OCI-LY7 (cell line): ENCODE measurements at regions of chr12 and their contacts with region 1.

Region 1: DNA sequence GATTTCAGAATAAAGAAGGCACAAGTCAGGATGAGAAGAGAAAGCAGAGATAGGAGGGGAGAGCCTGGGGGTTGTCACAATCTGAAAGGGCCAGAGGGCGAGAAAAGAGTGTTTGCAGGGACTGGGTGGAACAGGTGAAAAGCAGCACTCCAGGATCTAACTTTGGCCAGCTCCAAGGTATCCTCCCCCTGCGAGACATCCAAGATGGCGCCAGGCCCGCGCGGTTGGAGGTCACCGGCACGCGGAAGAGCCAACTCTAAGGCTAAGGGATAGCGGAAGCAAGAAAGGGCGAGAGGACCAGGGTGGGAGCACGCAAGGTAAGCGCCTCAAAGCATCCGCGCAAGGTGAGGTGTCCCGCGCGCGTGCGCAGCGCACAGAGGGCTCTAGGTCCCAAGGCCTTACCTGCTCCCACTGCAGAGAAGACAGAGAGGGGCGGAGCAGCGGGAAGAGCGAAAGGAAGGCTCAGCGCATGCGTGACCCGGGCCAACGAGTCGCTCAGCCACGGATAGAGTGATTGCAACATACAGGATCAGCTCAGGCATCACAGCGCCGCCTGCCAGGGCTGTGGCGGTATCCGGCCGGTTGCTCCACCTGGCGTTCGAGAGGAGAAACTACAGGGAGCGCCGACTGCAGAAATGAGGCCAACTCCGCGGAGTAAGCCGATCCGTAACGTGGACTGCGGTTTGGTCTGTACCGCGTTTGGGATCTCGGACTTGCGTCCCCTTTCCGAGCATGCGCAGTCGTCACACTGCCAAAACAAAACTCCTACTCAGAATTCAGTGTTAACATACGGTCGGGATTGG is at the start of gene ATP5MC2:
- DNase-seq: peak; percentile 98
- H3K4me3 ChIP-seq: peak within 1 kb of the TSS; percentile 94
- H3K27ac ChIP-seq: peak within 1 kb of the TSS; percentile 77
- H3K4me1 ChIP-seq: peaks cover 23% of the 10 kb centered on the region
- CTCF ChIP-seq: peak; percentile 100
- total RNA-seq, gene ATP5MC2: 423 and 500 TPM in 2 replicates

Region 2: GRCh38 chr12:53543539-53543938 is 132.3 kb before region 1 on chr12:
- CTCF ChIA-PET with region 1: no interaction called
- POLR2A ChIA-PET with region 1: no interaction called
- intact Hi-C with region 1: loop called (anchors 1 kb)
- DNase-seq: peak; percentile 78
- H3K4me3 ChIP-seq: no peak overlapping the region
- H3K27ac ChIP-seq: no peak overlapping the region
- H3K4me1 ChIP-seq: no peaks in the 10 kb centered on the region
- CTCF ChIP-seq: peak; percentile 96

Region 3: DNA sequence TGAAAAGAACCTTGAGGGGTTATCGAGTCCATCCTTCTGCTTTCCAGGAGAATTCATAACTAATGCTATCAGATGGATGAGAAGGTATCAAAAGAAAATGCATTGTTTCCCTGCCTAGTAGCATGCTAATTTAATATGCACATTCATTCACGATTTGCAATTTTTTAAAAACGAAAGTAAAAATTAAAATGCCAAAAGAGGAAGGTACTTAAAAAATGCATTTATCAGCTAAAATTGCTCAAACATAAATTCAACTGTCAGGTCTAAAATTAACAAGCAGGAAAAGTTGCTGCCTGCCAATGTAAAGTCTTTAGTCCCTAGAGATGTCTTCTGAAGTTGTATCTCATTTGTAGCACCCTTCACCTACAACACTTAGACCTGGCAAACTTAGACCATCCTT is 57.6 kb before region 1 on chr12:
- CTCF ChIA-PET with region 1: interaction called, 5 read pairs
- POLR2A ChIA-PET with region 1: interaction called, 9 read pairs
- intact Hi-C with region 1: loop called (anchors 2 kb)
- DNase-seq: peak; percentile 62
- H3K4me3 ChIP-seq: peak overlapping the region; percentile 59
- H3K27ac ChIP-seq: peak overlapping the region; percentile 77
- H3K4me1 ChIP-seq: peaks cover 39% of the 10 kb centered on the region
- CTCF ChIP-seq: no peak

Region 4: GRCh38 chr12:53625946-53626701 is 49.7 kb before region 1 on chr12 and contains the start of gene ATF7:
- CTCF ChIA-PET with region 1: interaction called, 5 read pairs
- POLR2A ChIA-PET with region 1: interaction called, 9 read pairs
- intact Hi-C with region 1: loop called (anchors 2 kb)
- DNase-seq: peak; percentile 98
- H3K4me3 ChIP-seq: peak within 1 kb of the TSS; percentile 90
- H3K27ac ChIP-seq: peak within 1 kb of the TSS; percentile 43
- H3K4me1 ChIP-seq: peaks cover 29% of the 10 kb centered on the region
- CTCF ChIP-seq: no peak
- total RNA-seq, gene ATF7: 5.9 and 6.8 TPM in 2 replicates